ENCODE measurements at regions of chr12 and their contacts with region 1.

Region 1: GRCh38 chr12:3034067-3034750 is 43.0 kb upstream of the TSPAN9 start:
- DNase-seq: peak; percentile 73
- ATAC-seq: peak; percentile 90

Region 2: DNA sequence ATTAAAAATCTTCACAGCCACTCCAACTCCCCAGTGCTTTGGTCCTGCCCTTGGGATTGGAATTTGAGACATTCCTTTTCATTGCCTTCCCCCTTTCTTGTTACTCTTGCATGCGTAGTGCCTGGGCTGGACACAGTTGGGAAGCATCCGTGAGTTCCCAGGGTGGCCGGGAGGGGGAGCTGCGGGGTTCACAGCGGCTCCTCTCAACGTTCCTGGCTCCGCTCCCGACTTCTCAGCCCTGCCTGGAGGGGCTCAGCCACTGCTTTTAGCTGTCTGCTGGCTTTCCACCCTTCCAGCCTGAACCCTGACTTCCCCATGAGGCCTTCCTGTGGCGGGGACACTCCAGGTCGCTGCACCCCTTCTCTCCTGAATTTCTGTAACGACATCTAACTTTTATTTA is 180.6 kb before region 1 on chr12:
- intact Hi-C with region 1: loop called (anchors 5 kb)
- DNase-seq: peak; percentile 90
- ATAC-seq: peak; percentile 92

Region 3: GRCh38 chr12:2879853-2880252 is 154.4 kb before region 1 on chr12:
- intact Hi-C with region 1: loop called (anchors 2 kb)
- DNase-seq: no peak
- ATAC-seq: no peak

Region 4: DNA sequence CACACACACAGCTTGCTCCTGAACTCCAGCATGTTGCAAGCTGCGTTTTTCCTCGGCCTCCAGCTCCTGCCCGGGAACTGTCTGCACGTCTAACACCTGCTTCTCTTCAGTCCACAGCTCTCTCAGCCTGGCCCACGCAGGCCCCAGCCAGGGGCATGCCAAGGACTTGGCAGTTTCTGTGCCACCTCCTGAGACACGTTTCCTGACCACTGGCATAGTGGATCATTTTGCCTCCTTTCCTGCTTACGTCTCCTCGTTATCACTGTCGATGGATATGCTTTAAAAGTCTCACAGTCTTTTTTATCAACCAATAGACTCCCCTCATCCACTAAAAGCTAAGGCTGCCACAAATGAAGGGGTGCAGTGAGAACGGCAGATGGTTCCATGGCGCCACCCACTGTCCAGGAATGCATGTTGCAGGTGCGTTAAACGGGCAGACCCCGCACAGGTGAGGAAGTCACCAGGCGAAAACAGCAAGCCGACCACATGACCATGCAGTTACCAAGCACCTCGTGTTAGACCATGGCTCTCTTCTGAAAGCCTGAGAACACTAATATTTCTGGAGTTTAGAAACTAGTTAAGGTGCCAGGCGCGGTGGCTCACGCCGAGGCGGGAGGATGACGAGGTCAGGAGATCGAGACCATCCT is 89.7 kb before region 1 on chr12:
- intact Hi-C with region 1: loop called (anchors 10 kb)
- DNase-seq: peak; percentile 57
- ATAC-seq: peak; percentile 87

Region 5: GRCh38 chr12:4203772-4204376 is 1169.7 kb after region 1 on chr12:
- intact Hi-C with region 1: no loop called
- DNase-seq: no peak
- ATAC-seq: no peak

Measured in Right ventricle myocardium superior (tissue), 1 donor.